ENCODE measurements at regions of chr2 and their contacts with region 1.

Region 1: GRCh38 chr2:207473049-207473930 is 56.5 kb upstream of the CREB1 start:
- DNase-seq: no peak
- ATAC-seq: peak in 3 of 4 donors; percentile 35 to 63 (median 62)
- H3K4me3 ChIP-seq: no peak overlapping the region
- H3K27ac ChIP-seq: no peak overlapping the region
- H3K4me1 ChIP-seq: no peaks in the 10 kb centered on the region
- H3K27me3 ChIP-seq: no peaks in the 10 kb centered on the region
- CTCF ChIP-seq: peak; percentile 40

Region 2: DNA sequence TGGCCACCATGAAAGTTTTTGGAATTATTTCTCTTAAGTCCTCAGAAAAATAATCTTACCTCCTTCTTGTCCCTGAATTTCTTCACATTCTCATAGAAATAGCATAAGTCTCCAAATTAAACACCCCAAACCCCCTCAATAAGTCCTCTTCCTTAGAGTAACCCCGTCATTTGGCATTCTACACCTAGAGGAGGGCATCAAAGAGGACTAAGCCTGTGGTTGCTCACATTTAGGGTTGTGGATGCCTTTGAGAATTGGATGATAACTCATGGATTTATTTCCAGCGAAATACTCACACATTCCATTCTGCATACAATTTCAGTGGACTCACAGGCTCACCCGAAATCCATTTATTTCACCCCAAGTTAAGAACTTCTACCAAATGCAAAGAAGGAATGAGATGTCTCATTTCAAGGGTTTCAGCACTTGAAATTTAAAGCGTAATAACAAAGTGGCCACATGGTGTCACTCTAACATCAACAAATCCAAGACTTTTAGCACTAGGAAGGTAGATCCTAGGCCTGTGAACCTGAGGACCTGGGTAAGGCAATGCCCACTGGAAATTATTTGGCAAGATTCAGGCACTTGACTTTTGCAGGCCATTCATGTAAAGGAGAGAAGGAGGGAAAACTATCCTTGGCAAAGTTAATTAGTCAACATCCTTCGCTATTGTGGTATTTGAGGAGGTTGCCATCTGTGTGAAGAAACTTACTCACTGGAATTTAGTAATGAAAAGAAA is 779.7 kb before region 1 on chr2:
- intact Hi-C with region 1: loop called (anchors 2 to 5 kb)
- DNase-seq: no peak
- ATAC-seq: peak; percentile 61 to 81 (median 62)
- H3K4me3 ChIP-seq: no peak overlapping the region
- H3K27ac ChIP-seq: no peak overlapping the region
- H3K4me1 ChIP-seq: no peaks in the 10 kb centered on the region
- H3K27me3 ChIP-seq: no peaks in the 10 kb centered on the region
- CTCF ChIP-seq: peak; percentile 66

Region 3: GRCh38 chr2:206800506-206801417 is 672.5 kb before region 1 on chr2:
- intact Hi-C with region 1: loop called (anchors 2 to 5 kb)
- DNase-seq: peak; percentile 47 to 57
- ATAC-seq: peak; percentile 46 to 80 (median 65)
- H3K4me3 ChIP-seq: no peak overlapping the region
- H3K27ac ChIP-seq: no peak overlapping the region
- H3K4me1 ChIP-seq: peaks cover 8% of the 10 kb centered on the region
- H3K27me3 ChIP-seq: no peaks in the 10 kb centered on the region
- CTCF ChIP-seq: peak; percentile 57

Region 4: DNA sequence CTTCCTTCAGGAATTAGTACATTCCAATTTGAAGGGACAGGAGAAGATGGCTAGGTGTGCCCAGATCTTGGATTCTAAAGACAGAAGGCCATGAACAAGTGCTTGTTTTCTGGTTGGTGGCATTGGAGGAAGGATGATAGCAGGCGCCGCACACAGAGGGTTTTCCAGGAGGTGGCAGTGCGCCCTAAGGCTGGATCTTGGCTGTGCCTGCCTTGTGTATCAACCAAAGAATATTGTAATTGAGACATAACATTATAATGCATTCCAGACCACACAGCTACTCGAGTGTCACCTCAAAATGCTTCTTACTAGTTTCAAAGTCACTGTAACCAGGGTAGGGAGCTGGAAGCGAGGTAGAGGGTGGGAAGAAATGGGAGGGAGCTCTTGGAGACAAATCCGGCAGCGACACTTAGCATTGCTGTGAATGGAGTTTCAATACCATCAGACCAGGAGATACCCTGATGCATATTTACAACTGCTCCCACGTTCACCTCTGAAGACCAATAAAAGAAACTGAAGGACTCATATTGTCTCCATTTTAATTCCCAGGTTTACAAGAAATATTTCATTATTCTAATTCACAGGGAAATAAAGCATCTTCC is 491.4 kb before region 1 on chr2:
- intact Hi-C with region 1: loop called (anchors 2 kb)
- DNase-seq: peak; percentile 67 to 82
- ATAC-seq: peak; percentile 74 to 90 (median 82)
- H3K4me3 ChIP-seq: no peak overlapping the region
- H3K27ac ChIP-seq: no peak overlapping the region
- H3K4me1 ChIP-seq: peaks cover 6% of the 10 kb centered on the region
- H3K27me3 ChIP-seq: peaks cover 0 to 2% (median 0%) of the 10 kb centered on the region in 3 donors
- CTCF ChIP-seq: peak; percentile 81

Region 5: DNA sequence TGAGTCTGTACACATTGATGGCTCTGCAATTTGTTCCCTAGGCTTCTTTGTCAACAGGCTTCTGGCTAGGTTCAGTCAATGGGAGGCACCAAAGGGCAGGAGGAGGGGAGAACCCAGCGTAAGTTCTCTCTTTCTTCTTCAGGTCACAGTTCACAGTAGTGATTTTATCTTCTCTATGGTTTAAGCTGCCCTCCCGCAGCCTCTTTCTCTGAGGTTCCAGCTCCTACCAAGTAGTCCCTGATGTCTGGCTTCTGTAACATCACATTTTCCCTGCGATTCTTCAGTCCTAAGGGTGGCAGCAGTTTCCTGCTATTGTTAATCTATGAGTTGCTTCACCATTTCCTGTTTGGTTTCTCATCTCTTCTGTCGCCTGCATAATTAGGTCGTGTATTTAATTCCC is 426.6 kb before region 1 on chr2:
- intact Hi-C with region 1: loop called in 1 of 2 experiments (anchors 10 kb)
- DNase-seq: no peak
- ATAC-seq: peak in 2 of 4 donors; percentile 22 to 61
- H3K4me3 ChIP-seq: no peak overlapping the region
- H3K27ac ChIP-seq: no peak overlapping the region
- H3K4me1 ChIP-seq: no peaks in the 10 kb centered on the region
- H3K27me3 ChIP-seq: no peaks in the 10 kb centered on the region
- CTCF ChIP-seq: no peak

Region 6: DNA sequence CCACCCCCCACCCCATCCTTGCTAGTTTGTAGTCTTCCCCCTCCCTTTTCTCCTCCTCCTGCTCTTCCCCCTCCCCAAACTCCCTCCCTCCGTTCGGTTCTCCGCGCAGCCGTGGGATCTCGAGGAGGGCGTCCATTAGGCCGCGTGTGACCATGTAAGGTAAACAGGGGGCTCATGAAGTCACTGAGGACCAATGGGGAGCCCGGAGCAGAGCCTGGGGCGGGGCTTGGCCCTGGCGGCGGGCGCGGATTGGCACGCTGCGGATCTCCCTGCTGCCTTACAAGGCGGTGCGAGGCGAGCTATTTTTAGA is 307.3 kb before region 1 on chr2:
- intact Hi-C with region 1: loop called in 1 of 2 experiments (anchors 2 kb)
- DNase-seq: peak; percentile 98 to 99
- ATAC-seq: peak; percentile 90 to 97 (median 96)
- H3K4me3 ChIP-seq: peak overlapping the region; percentile 88
- H3K27ac ChIP-seq: peak overlapping the region; percentile 100
- H3K4me1 ChIP-seq: peaks cover 25% of the 10 kb centered on the region
- H3K27me3 ChIP-seq: no peaks in the 10 kb centered on the region
- CTCF ChIP-seq: no peak